ENCODE measurements at regions of chr19 and their contacts with region 1.

Region 1: DNA sequence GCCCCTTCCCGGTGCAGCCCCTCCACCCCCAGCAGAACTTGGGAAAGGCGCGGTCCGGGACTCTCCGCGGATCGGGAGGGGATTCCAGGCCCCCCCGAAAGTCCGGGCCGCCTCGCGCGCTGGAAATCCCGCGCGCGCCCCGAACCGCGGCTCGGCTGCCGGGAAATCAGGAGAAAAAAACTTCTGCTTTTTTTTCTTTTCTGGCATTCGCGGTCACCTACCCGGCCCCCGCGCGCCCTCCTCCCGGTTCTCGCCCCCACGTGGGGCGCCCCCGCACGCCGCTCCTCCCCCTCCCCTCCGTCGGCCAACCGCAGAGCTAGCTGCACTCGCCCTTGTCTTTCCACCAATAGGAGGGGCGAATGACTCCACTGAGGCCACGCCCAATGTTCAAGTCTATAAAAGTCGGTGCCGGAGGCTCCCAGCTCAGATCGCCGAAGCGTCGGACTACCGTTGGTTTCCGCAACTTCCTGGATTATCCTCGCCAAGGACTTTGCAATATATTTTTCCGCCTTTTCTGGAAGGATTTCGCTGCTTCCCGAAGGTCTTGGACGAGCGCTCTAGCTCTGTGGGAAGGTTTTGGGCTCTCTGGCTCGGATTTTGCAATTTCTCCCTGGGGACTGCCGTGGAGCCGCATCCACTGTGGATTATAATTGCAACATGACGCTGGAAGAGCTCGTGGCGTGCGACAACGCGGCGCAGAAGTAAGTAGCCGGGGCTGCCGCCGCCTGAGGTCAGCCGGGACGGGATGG is at the start of gene GADD45B:
- DNase-seq: peak; percentile 97
- H3K4me3 Mint-ChIP-seq: peak within 1 kb of the TSS; percentile 93
- H3K27ac Mint-ChIP-seq: peak within 1 kb of the TSS; percentile 91
- H3K4me1 Mint-ChIP-seq: peaks cover 16% of the 10 kb centered on the region
- H3K27me3 Mint-ChIP-seq: no peaks in the 10 kb centered on the region
- total RNA-seq, gene GADD45B: 129 and 132 TPM in 2 replicates

Region 2: GRCh38 chr19:2365201-2365970 is 110.5 kb before region 1 on chr19:
- intact Hi-C with region 1: no loop called
- DNase-seq: no peak
- H3K4me3 Mint-ChIP-seq: no peak overlapping the region
- H3K27ac Mint-ChIP-seq: no peak overlapping the region
- H3K4me1 Mint-ChIP-seq: no peaks in the 10 kb centered on the region
- H3K27me3 Mint-ChIP-seq: peaks cover 10% of the 10 kb centered on the region

Region 3: GRCh38 chr19:2381148-2381820 is 94.6 kb before region 1 on chr19:
- intact Hi-C with region 1: no loop called
- DNase-seq: no peak
- H3K4me3 Mint-ChIP-seq: no peak overlapping the region
- H3K27ac Mint-ChIP-seq: no peak overlapping the region
- H3K4me1 Mint-ChIP-seq: no peaks in the 10 kb centered on the region
- H3K27me3 Mint-ChIP-seq: peaks cover 1% of the 10 kb centered on the region

Region 4: DNA sequence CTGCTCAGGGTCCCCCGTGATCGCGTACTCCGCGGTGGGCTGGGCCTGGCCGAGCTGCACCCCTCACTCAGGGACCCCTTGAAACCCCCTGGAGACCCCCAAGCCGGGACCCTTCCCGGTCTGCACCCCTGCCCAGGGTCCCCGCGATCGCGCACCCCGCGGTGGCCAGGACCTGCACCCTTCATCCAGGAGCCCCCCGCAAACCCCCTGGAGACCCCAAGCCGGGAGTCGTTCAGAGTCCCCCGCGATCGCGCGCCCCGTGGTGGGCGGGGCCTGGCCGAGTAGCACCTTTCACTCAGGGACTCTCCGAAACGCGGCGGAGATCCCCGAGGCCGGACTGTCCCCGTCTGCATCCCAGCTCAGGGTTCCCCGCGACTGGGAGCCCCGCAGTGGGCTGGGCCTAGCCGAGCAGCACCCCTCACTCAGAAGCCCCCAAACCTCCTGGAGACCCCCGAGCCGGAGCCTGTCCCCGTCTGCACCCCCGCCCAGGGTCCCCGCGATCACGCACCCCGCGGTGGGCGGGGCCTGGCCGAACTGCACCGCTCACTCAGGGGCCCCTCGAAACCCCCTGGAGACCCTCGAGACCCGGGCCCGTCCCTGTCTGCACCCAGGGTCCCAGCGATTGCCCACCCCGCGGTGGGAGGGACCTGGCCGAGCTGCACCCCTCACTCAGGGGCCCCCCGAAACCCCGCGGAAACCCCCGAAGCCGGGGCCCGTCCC is 19.9 kb before region 1 on chr19:
- intact Hi-C with region 1: loop called (anchors 2 kb)
- DNase-seq: peak; percentile 37
- H3K4me3 Mint-ChIP-seq: peak overlapping the region; percentile 87
- H3K27ac Mint-ChIP-seq: peak overlapping the region; percentile 84
- H3K4me1 Mint-ChIP-seq: peaks cover 25% of the 10 kb centered on the region
- H3K27me3 Mint-ChIP-seq: no peaks in the 10 kb centered on the region

Region 5: DNA sequence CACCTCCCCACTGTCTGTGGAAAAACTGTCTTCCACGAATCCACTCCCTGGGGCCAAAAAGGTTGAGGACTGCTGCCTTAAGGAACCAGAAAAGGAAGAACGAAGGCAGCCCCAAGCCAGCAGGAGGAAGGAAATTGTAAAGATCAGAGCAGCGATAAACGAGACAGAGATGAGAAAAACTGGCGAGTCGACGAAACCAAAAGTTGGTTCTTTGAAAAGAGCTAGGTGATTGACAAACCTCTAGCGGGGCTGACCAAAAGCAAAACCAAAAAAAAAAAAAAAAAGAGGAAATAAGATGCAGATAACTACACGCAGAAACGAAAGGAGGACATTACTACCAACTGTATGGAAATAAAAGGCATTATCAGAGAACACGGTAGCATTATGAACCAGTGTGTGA is 77.0 kb after region 1 on chr19:
- intact Hi-C with region 1: loop called (anchors 1 kb)
- DNase-seq: peak; percentile 69
- H3K4me3 Mint-ChIP-seq: peak overlapping the region; percentile 7
- H3K27ac Mint-ChIP-seq: peak overlapping the region; percentile 74
- H3K4me1 Mint-ChIP-seq: peaks cover 16% of the 10 kb centered on the region
- H3K27me3 Mint-ChIP-seq: no peaks in the 10 kb centered on the region

Region 6: DNA sequence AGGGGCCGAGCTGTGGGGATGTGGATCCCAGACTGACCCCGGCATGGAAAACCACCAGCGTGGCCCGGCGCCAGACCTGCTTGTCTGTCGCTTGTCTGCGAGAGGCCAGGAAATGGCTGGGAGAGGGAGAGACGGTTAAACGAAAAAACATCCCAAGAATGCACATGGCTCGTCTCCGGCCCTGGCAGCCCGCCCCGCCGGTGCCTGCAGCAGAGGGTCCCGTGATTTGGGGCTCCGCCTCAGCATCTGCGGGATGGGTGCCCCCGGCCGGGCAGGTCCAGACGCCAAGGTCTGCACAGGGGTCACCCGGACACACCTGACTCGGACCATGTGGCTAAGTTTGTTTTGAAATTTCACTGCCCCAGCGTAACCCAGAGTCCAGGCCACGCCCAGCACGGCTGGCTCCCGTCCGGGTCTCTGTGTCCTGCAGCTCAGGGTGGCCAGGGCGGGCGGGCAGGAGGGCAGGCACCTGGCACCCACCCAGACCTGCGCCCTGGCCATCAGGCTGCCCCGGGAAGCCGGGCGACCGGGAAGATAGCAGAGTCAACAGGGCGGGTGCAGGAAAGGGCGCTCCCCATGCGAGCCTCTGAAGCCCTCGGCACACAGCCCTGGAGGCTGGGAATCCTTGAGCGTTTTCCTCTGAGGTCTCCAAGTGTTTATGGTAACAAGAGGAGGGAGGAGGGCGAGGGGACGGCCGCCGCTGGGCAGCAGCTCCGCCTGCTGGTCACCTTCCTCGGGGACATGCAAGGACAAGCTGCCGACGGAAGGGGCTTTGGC is 103.2 kb after region 1 on chr19:
- intact Hi-C with region 1: loop called (anchors 1 kb)
- DNase-seq: peak; percentile 53
- H3K4me3 Mint-ChIP-seq: peak overlapping the region; percentile 33
- H3K27ac Mint-ChIP-seq: no peak overlapping the region
- H3K4me1 Mint-ChIP-seq: peaks cover 6% of the 10 kb centered on the region
- H3K27me3 Mint-ChIP-seq: peaks cover 5% of the 10 kb centered on the region

Region 7: DNA sequence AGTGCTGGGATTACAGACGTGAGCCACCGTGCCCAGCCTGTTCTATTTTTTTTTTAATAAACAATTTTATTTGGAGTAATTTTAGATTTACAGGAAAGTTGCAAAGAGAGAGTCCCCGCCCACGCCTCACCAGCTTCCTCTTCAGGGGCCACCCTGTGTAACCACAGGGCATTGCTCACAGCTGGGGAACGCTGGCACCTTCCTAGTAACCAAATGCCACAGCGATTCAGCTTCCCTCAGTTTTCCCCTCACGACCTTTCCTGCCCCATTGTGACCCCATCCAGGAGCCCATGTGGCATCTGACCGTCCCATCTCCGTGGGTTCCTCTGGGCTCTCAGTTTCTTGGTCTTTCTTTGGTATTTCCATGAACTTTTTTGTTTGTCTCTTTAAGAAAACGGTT is 142.7 kb after region 1 on chr19:
- intact Hi-C with region 1: loop called (anchors 1 kb)
- DNase-seq: peak; percentile 36
- H3K4me3 Mint-ChIP-seq: peak overlapping the region; percentile 63
- H3K27ac Mint-ChIP-seq: peak overlapping the region; percentile 96
- H3K4me1 Mint-ChIP-seq: peaks cover 64% of the 10 kb centered on the region
- H3K27me3 Mint-ChIP-seq: peaks cover 2% of the 10 kb centered on the region

Region 8: GRCh38 chr19:2739602-2740313 is 263.9 kb after region 1 on chr19 and contains the start of gene SLC39A3:
- intact Hi-C with region 1: loop called (anchors 10 kb)
- DNase-seq: peak; percentile 98
- H3K4me3 Mint-ChIP-seq: peak within 1 kb of the TSS; percentile 93
- H3K27ac Mint-ChIP-seq: peak within 1 kb of the TSS; percentile 87
- H3K4me1 Mint-ChIP-seq: peaks cover 9% of the 10 kb centered on the region
- H3K27me3 Mint-ChIP-seq: peaks cover 5% of the 10 kb centered on the region
- total RNA-seq, gene SLC39A3: 50.3 and 51.6 TPM in 2 replicates

Region 9: GRCh38 chr19:3035542-3036118 is 559.8 kb after region 1 on chr19:
- intact Hi-C with region 1: loop called (anchors 5 kb)
- DNase-seq: peak; percentile 95
- H3K4me3 Mint-ChIP-seq: peak overlapping the region; percentile 94
- H3K27ac Mint-ChIP-seq: peak overlapping the region; percentile 98
- H3K4me1 Mint-ChIP-seq: peaks cover 18% of the 10 kb centered on the region
- H3K27me3 Mint-ChIP-seq: peaks cover 23% of the 10 kb centered on the region